CD8-positive, alpha-beta T cell (primary cell): ENCODE measurements at regions of chr18 and their contacts with region 1.

Region 1: DNA sequence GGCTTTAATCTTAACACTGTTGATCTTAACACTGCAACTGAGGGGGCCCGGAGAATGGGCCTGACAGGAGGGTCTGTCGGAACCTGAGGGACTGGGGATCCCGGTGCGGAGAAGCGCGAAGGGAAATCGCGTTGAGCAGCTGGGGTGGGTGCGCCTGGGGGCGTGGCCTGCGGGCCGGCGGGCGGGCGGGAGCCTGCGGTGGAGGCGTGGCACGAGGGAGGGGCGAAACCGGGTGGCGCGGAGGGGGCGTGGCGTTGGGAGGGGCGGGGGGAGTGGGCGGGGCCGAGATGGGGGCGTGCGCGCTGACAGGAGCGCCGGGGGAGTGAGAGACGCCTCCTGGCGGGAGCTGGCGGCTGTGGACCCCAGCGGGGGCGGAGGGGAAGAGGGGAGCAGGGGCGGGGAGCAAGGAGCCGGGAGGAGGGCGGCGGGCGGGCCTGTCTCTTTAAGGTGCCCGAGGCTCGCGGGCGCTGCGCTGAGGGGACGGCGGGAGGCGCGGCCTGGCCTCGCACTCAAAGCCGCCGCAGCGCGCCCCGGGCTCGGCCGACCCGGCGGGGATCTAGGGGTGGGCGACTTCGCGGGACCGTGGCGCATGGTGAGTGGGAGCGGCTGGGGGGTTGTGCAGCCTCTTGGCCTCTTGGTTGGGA is at the start of gene TWSG1:
- DNase-seq: peak; percentile 90 to 97 (median 94)
- ATAC-seq: peak; percentile 88
- H3K4me3 ChIP-seq: peak within 1 kb of the TSS; percentile 62 to 69
- H3K4me3 Mint-ChIP-seq: peak within 1 kb of the TSS; percentile 81
- H3K27ac ChIP-seq: peak within 1 kb of the TSS; percentile 61 to 67
- H3K27ac Mint-ChIP-seq: peak within 1 kb of the TSS; percentile 86
- H3K4me1 ChIP-seq: peaks cover 8% of the 10 kb centered on the region
- H3K4me1 Mint-ChIP-seq: peaks cover 27% of the 10 kb centered on the region
- H3K27me3 ChIP-seq: no peaks in the 10 kb centered on the region
- H3K27me3 Mint-ChIP-seq: no peaks in the 10 kb centered on the region
- CTCF ChIP-seq: peak; percentile 30
- total RNA-seq, gene TWSG1: 4.2 to 5.3 TPM

Region 2: GRCh38 chr18:8704361-8705279 is 629.8 kb before region 1 on chr18:
- CTCF ChIA-PET with region 1: no interaction called
- POLR2A ChIA-PET with region 1: no interaction called
- intact Hi-C with region 1: loop called (anchors 1 to 2 kb)
- DNase-seq: peak; percentile 59 to 91 (median 84)
- ATAC-seq: peak; percentile 95
- H3K4me3 ChIP-seq: peak overlapping the region; percentile 73
- H3K4me3 Mint-ChIP-seq: peak overlapping the region; percentile 89
- H3K27ac ChIP-seq: no peak overlapping the region
- H3K27ac Mint-ChIP-seq: no peak overlapping the region
- H3K4me1 ChIP-seq: peaks cover 15% of the 10 kb centered on the region
- H3K4me1 Mint-ChIP-seq: peaks cover 17% of the 10 kb centered on the region
- H3K27me3 ChIP-seq: peaks cover 16 to 24% of the 10 kb centered on the region in 2 experiments
- H3K27me3 Mint-ChIP-seq: peaks cover 62% of the 10 kb centered on the region
- CTCF ChIP-seq: no peak

Region 3: DNA sequence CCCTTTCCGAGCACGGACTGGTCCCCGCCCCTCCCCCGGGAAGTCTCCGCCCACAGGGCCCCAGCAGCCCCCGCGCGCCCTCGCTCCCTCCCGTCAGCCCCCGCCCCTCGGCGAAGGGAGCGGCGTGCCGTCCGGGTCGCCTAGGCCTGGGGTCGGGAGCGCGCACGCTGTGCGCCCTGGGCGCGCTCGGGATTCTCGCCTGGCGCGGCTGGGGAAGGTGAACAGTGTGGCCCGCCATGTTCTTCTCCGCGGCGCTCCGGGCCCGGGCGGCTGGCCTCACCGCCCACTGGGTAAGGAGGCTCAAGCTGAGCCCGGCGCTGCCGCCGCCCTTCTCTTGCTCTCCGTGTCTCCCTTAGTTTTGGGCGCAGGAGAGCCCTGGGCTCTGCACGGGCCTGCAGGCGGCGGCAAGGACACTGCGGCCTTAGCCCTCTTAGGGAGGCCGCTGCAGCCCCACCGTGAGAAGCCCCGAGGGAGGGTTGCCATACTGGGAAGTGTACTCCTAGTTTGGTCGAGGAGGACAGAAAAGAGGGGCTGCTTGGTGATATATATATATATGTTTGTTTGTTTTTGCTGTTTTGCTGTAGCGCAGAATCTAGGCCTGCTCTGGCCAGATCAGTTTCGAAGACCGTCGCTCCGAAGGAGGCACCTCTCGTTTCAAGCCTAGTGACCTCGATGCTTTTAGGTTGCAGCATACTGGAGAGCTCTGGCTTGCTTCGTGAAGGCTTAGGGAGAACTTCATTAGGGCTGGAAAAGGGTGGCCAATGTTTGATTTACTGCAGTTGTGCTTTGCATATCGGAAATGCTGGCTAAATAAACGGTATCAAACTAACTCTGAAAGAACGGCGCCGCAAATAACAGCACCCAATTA is 231.7 kb before region 1 on chr18 and contains the start of gene NDUFV2:
- CTCF ChIA-PET with region 1: no interaction called
- POLR2A ChIA-PET with region 1: interaction called, 7 read pairs
- intact Hi-C with region 1: loop called (anchors 1 kb)
- DNase-seq: peak; percentile 96 to 99 (median 98)
- ATAC-seq: peak; percentile 95
- H3K4me3 ChIP-seq: peak within 1 kb of the TSS; percentile 55 to 82
- H3K4me3 Mint-ChIP-seq: peak within 1 kb of the TSS; percentile 89
- H3K27ac ChIP-seq: peak within 1 kb of the TSS; percentile 69 to 87
- H3K27ac Mint-ChIP-seq: peak within 1 kb of the TSS; percentile 94
- H3K4me1 ChIP-seq: peaks cover 46% of the 10 kb centered on the region
- H3K4me1 Mint-ChIP-seq: peaks cover 60% of the 10 kb centered on the region
- H3K27me3 ChIP-seq: no peaks in the 10 kb centered on the region
- H3K27me3 Mint-ChIP-seq: no peaks in the 10 kb centered on the region
- CTCF ChIP-seq: no peak
- total RNA-seq, gene NDUFV2: 229 to 249 TPM

Region 4: GRCh38 chr18:9209279-9209678 is 125.2 kb before region 1 on chr18:
- CTCF ChIA-PET with region 1: no interaction called
- POLR2A ChIA-PET with region 1: no interaction called
- intact Hi-C with region 1: loop called in 1 of 2 experiments (anchors 5 kb)
- DNase-seq: no peak
- ATAC-seq: no peak
- H3K4me3 ChIP-seq: no peak overlapping the region
- H3K4me3 Mint-ChIP-seq: no peak overlapping the region
- H3K27ac ChIP-seq: no peak overlapping the region
- H3K27ac Mint-ChIP-seq: no peak overlapping the region
- H3K4me1 ChIP-seq: no peaks in the 10 kb centered on the region
- H3K4me1 Mint-ChIP-seq: peaks cover 17% of the 10 kb centered on the region
- H3K27me3 ChIP-seq: no peaks in the 10 kb centered on the region
- H3K27me3 Mint-ChIP-seq: no peaks in the 10 kb centered on the region
- CTCF ChIP-seq: no peak

Region 5: GRCh38 chr18:9275890-9276289 is 58.6 kb before region 1 on chr18:
- CTCF ChIA-PET with region 1: no interaction called
- POLR2A ChIA-PET with region 1: no interaction called
- intact Hi-C with region 1: loop called in 1 of 2 experiments (anchors 10 kb)
- DNase-seq: no peak
- ATAC-seq: no peak
- H3K4me3 ChIP-seq: no peak overlapping the region
- H3K4me3 Mint-ChIP-seq: no peak overlapping the region
- H3K27ac ChIP-seq: no peak overlapping the region
- H3K27ac Mint-ChIP-seq: peak overlapping the region; percentile 27
- H3K4me1 ChIP-seq: no peaks in the 10 kb centered on the region
- H3K4me1 Mint-ChIP-seq: peaks cover 2% of the 10 kb centered on the region
- H3K27me3 ChIP-seq: no peaks in the 10 kb centered on the region
- H3K27me3 Mint-ChIP-seq: no peaks in the 10 kb centered on the region
- CTCF ChIP-seq: no peak

Region 6: DNA sequence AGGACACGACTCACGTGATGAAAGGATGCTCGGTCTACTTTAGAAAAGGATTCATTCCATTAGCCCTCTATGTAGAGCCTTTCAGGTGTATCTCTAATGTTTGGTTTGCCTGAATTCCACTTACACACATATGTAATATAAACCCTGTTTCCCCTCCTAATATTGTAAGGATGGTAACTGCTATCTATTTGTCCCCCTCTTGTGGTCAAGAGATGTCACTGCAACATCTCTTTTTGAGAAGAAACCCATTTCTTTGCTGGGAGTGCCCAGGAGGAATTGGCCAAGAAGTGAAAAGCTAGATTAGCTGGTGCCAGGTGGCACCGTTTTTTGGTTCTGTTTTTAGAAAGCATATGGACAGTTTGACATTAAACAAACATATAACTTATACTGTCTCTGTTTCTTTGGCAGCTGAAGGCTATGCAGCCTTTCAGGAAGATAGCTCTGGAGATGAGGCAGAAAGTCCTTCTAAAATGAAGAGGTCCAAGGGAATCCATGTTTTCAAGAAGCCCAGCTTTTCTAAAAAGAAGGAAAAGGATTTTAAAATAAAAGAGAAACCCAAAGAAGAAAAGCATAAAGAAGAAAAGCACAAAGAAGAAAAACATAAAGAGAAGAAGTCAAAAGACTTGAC is 182.1 kb after region 1 on chr18:
- CTCF ChIA-PET with region 1: interaction called, 4 read pairs
- POLR2A ChIA-PET with region 1: no interaction called
- intact Hi-C with region 1: loop called in 1 of 2 experiments (anchors 5 kb)
- DNase-seq: peak in 2 of 9 experiments; percentile 45 to 61
- ATAC-seq: peak; percentile 73
- H3K4me3 ChIP-seq: no peak overlapping the region
- H3K4me3 Mint-ChIP-seq: no peak overlapping the region
- H3K27ac ChIP-seq: no peak overlapping the region
- H3K27ac Mint-ChIP-seq: no peak overlapping the region
- H3K4me1 ChIP-seq: no peaks in the 10 kb centered on the region
- H3K4me1 Mint-ChIP-seq: peaks cover 12% of the 10 kb centered on the region
- H3K27me3 ChIP-seq: no peaks in the 10 kb centered on the region
- H3K27me3 Mint-ChIP-seq: no peaks in the 10 kb centered on the region
- CTCF ChIP-seq: peak; percentile 90

Region 7: GRCh38 chr18:10525371-10526210 is 1191.1 kb after region 1 on chr18 and contains the start of gene NAPG:
- CTCF ChIA-PET with region 1: no interaction called
- POLR2A ChIA-PET with region 1: no interaction called
- intact Hi-C with region 1: loop called in 1 of 2 experiments (anchors 5 kb)
- DNase-seq: peak; percentile 78 to 97 (median 88)
- ATAC-seq: peak; percentile 86
- H3K4me3 ChIP-seq: peak within 1 kb of the TSS; percentile 90 to 98
- H3K4me3 Mint-ChIP-seq: peak within 1 kb of the TSS; percentile 97
- H3K27ac ChIP-seq: peak within 1 kb of the TSS; percentile 75 to 87
- H3K27ac Mint-ChIP-seq: peak within 1 kb of the TSS; percentile 96
- H3K4me1 ChIP-seq: peaks cover 31% of the 10 kb centered on the region
- H3K4me1 Mint-ChIP-seq: peaks cover 50% of the 10 kb centered on the region
- H3K27me3 ChIP-seq: no peaks in the 10 kb centered on the region
- H3K27me3 Mint-ChIP-seq: no peaks in the 10 kb centered on the region
- CTCF ChIP-seq: no peak
- total RNA-seq, gene NAPG: 33.2 to 35.8 TPM